Ovary (tissue), 10 donors: ENCODE measurements at regions of chr2 and their contacts with region 1.

Region 1: GRCh38 chr2:38377050-38377828 is at the start of gene ATL2:
- DNase-seq: peak; percentile 96 to 97 (median 96)
- H3K4me3 ChIP-seq: peak within 1 kb of the TSS; percentile 73
- H3K27ac ChIP-seq: peak within 1 kb of the TSS; percentile 94 to 100
- H3K4me1 ChIP-seq: peaks cover 3% of the 10 kb centered on the region
- H3K27me3 ChIP-seq: no peaks in the 10 kb centered on the region
- CTCF ChIP-seq: peak in 1 of 3 donors; percentile 55
- EP300 ChIP-seq: no peak
- POLR2A ChIP-seq: peak; percentile 98
- total RNA-seq, gene ATL2: 75.2 to 149 (median 96.3) TPM

Region 2: GRCh38 chr2:38106405-38107094 is 270.7 kb before region 1 on chr2:
- intact Hi-C with region 1: no loop called
- DNase-seq: no peak
- H3K4me3 ChIP-seq: no peak overlapping the region
- H3K27ac ChIP-seq: peak overlapping the region; percentile 46 to 74
- H3K4me1 ChIP-seq: peaks cover 9% of the 10 kb centered on the region
- H3K27me3 ChIP-seq: no peaks in the 10 kb centered on the region
- CTCF ChIP-seq: no peak
- EP300 ChIP-seq: no peak
- POLR2A ChIP-seq: no peak

Region 3: DNA sequence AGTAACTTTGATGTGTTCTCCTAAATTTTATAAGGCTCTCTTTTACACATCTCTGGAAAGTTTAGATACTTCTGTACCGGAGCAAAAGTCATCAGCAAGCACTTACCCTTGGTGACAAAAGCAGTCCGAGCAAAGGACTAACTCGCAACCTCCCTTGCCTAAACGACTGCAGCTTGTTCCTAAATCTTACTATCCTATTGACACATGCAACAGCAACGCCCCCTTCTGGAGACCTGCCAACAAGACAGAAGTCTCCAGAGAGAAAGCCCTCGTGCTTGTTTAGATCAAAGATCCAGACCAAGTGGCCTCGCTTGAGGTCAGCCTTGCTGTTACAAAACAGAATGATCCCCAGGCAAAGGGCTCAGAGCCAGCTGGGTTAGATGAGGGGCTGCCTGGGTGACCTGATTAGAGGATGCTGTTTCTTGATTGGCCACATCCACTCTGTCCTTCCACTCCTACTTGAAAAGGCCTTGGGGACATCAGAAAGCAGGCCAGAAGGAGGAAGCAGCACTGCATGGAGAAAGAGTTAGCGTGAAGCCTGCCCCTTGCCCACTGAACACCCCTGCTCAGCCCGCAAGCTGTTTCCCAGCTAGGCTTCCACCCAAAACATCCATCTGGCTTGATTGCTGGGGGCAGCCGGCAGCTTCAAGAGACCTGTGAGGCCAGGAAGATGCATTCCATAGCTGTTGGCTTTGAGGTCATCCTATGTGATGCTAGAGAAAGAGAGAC is 131.2 kb after region 1 on chr2:
- intact Hi-C with region 1: loop called in 1 of 4 experiments (anchors 10 kb)
- DNase-seq: peak; percentile 83 to 93 (median 91)
- H3K4me3 ChIP-seq: no peak overlapping the region
- H3K27ac ChIP-seq: peak overlapping the region in 1 of 2 donors; percentile 68
- H3K4me1 ChIP-seq: peaks cover 17% of the 10 kb centered on the region
- H3K27me3 ChIP-seq: no peaks in the 10 kb centered on the region
- CTCF ChIP-seq: peak in 2 of 3 donors; percentile 9 to 13
- EP300 ChIP-seq: no peak
- POLR2A ChIP-seq: no peak

Region 4: DNA sequence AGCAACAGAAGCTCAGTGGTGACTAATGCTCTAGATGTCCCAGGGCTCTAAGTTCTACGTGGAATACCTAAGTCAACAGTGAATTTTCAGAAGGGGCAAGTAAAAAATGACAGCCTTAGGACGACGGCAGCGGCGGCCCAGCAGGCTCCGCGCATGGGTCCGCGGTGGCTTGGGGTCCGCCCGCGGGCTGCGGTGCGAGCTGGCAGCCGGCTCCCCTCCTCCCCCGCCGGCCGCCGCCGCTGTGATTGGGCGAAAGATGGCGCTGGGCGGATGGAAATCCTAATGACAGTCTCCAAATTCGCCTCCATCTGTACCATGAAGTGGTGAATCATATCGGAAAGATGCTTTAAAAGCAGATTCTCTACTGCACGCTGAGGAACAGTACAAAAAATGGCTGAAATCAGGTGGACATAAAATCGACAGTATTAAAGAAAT is 150.8 kb after region 1 on chr2:
- intact Hi-C with region 1: loop called in 2 of 4 experiments (anchors 10 kb)
- DNase-seq: peak; percentile 51 to 73 (median 56)
- H3K4me3 ChIP-seq: peak overlapping the region; percentile 34
- H3K27ac ChIP-seq: peak overlapping the region in 1 of 2 donors; percentile 77
- H3K4me1 ChIP-seq: peaks cover 4% of the 10 kb centered on the region
- H3K27me3 ChIP-seq: no peaks in the 10 kb centered on the region
- CTCF ChIP-seq: no peak
- EP300 ChIP-seq: no peak
- POLR2A ChIP-seq: no peak

Region 5: GRCh38 chr2:38535744-38536506 is 158.7 kb after region 1 on chr2:
- intact Hi-C with region 1: loop called in 1 of 4 experiments (anchors 10 kb)
- DNase-seq: peak; percentile 82 to 93 (median 91)
- H3K4me3 ChIP-seq: peak overlapping the region; percentile 46
- H3K27ac ChIP-seq: no peak overlapping the region
- H3K4me1 ChIP-seq: no peaks in the 10 kb centered on the region
- H3K27me3 ChIP-seq: no peaks in the 10 kb centered on the region
- CTCF ChIP-seq: peak; percentile 91 to 98 (median 92)
- EP300 ChIP-seq: no peak
- POLR2A ChIP-seq: no peak

Region 6: GRCh38 chr2:38602732-38603401 is 225.6 kb after region 1 on chr2 and contains the start of gene HNRNPLL:
- intact Hi-C with region 1: loop called in 1 of 4 experiments (anchors 10 kb)
- DNase-seq: peak; percentile 98 to 99 (median 99)
- H3K4me3 ChIP-seq: peak within 1 kb of the TSS; percentile 79
- H3K27ac ChIP-seq: peak within 1 kb of the TSS; percentile 95 to 98
- H3K4me1 ChIP-seq: peaks cover 8% of the 10 kb centered on the region
- H3K27me3 ChIP-seq: no peaks in the 10 kb centered on the region
- CTCF ChIP-seq: no peak
- EP300 ChIP-seq: peak; percentile 22
- POLR2A ChIP-seq: peak; percentile 97
- total RNA-seq, gene HNRNPLL: 46.9 to 59.2 (median 48.9) TPM

Region 7: DNA sequence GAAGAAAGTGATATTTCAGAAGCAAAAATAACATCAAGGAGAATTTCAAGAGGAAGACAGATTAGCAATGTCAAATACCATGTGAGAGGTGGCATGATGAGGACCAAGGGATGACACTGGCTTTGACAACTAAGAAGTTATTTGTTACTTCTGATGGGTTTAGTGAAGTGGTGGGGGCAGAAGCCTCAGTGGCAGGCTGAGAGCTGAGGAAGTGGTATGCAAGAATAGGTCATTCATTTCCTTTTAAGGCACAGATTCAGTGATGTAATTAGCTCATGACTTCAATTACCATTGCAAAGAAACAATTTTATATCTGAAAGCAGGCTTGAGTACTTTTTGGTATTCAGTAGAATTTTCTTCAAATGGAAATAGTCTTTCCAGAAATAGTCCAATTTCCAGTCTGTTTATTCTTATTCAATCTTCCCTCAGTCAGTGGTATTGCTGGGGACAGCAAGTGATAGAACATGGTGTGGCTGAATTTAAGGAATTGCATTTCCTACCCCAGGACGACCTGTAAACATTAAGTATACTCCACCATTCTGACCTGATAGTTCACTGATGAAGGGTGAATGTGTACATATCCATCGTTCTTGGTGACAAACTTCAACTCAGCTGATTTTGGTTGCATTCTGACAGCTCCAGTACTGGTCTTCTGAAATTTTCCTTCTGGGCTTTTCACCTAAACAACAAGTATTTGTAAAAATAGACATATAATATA is 428.9 kb after region 1 on chr2:
- intact Hi-C with region 1: no loop called
- DNase-seq: no peak
- H3K4me3 ChIP-seq: no peak overlapping the region
- H3K27ac ChIP-seq: no peak overlapping the region
- H3K4me1 ChIP-seq: no peaks in the 10 kb centered on the region
- H3K27me3 ChIP-seq: no peaks in the 10 kb centered on the region
- CTCF ChIP-seq: no peak
- EP300 ChIP-seq: no peak
- POLR2A ChIP-seq: no peak